Activated CD4-positive, alpha-beta T cell treated with anti-CD3 and anti-CD28 coated beads for 36 hours (primary cell): ENCODE measurements at regions of chr17 and their contacts with region 1.

Region 1: GRCh38 chr17:49753959-49754391 is 10.0 kb downstream of the FAM117A start:
- DNase-seq: no peak
- ATAC-seq: no peak
- H3K4me3 Mint-ChIP-seq: no peak overlapping the region
- H3K27ac Mint-ChIP-seq: no peak overlapping the region
- H3K4me1 Mint-ChIP-seq: peaks cover 74% of the 10 kb centered on the region
- H3K27me3 Mint-ChIP-seq: no peaks in the 10 kb centered on the region

Region 2: DNA sequence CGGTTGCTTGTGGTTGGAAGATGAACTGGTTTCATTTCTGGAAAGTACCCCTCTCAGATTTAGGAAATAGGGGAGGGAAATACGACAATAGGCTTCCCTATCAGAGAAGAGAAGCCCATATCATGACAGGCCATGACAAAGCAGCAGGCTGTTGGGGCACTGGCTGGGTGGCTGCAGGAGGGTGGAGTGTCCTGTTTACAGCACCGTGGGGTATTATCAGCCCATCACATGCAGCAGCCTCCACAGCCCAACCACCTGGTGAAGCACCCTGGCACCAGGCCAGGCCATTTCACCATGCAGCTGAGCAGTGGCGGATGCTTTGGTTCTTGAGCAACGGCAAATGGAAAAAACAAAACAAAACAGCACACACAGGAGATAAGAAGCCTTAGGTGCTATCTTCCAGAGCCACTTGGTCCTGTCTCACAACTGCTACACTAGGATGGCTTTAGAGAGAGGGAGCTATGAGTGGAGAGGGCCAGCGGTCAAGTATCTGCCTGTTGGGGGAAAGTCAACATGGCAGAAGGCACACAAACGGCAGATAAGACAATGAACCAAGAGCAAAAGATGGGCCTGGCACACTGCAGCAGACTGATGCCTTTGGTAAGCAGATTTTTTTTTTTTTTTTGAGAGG is 14.2 kb before region 1 on chr17:
- CTCF ChIA-PET with region 1: interaction called, 11 read pairs
- POLR2A ChIA-PET with region 1: interaction called, 4 read pairs
- intact Hi-C with region 1: loop called in 1 of 2 experiments (anchors 1 kb)
- DNase-seq: peak; percentile 90
- ATAC-seq: peak; percentile 88
- H3K4me3 Mint-ChIP-seq: peak overlapping the region; percentile 74
- H3K27ac Mint-ChIP-seq: peak overlapping the region; percentile 99
- H3K4me1 Mint-ChIP-seq: peaks cover 75% of the 10 kb centered on the region
- H3K27me3 Mint-ChIP-seq: no peaks in the 10 kb centered on the region

Region 3: DNA sequence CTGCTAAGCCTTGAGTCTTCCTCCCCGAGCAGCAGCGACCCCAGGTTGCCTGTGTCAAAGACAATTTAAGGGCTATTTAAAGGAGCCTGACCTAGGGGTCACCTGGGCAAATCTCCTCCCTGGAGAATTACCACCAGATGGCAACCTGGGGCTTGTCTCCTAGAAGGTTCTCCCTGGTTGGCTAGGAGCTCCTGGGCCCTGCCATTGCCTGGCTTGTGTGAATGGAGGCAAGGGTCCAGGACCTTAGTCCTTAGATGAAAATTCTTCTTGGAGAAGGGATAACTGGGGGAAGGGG is 145.2 kb after region 1 on chr17:
- CTCF ChIA-PET with region 1: no interaction called
- POLR2A ChIA-PET with region 1: no interaction called
- intact Hi-C with region 1: no loop called
- DNase-seq: peak; percentile 15
- ATAC-seq: no peak
- H3K4me3 Mint-ChIP-seq: no peak overlapping the region
- H3K27ac Mint-ChIP-seq: no peak overlapping the region
- H3K4me1 Mint-ChIP-seq: no peaks in the 10 kb centered on the region
- H3K27me3 Mint-ChIP-seq: peaks cover 41% of the 10 kb centered on the region